ENCODE measurements at regions of chr18 and their contacts with region 1.

Region 1: GRCh38 chr18:21064347-21064746 is 47.3 kb downstream of the ROCK1 start:
- DNase-seq: no peak
- H3K4me3 ChIP-seq: no peak overlapping the region
- H3K27ac ChIP-seq: no peak overlapping the region
- H3K4me1 ChIP-seq: no peaks in the 10 kb centered on the region
- H3K27me3 ChIP-seq: no peaks in the 10 kb centered on the region
- CTCF ChIP-seq: no peak

Region 2: DNA sequence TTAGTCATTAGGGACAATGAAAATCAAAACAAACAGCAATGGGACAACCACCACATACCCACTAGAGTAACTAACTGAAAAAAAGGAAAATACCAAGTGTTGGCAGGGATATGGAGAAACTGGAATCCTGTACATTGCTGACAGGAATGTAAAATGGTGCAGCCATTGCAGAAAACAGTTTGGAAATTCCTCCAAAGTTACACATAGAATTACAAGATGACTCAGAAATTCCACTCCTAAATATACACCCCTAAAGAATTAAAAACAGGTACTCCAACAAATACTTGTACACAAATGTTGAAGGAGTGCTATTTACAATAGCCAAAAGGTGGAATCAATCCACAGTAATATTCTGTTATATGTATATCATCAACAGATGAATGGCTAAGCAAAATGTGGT is 63.7 kb before region 1 on chr18:
- CTCF ChIA-PET with region 1: no interaction called
- dilution Hi-C with region 1: no loop called
- in situ Hi-C with region 1: no loop called
- intact Hi-C with region 1: no loop called
- DNase-seq: peak; percentile 20
- H3K4me3 ChIP-seq: no peak overlapping the region
- H3K27ac ChIP-seq: no peak overlapping the region
- H3K4me1 ChIP-seq: peaks cover 8% of the 10 kb centered on the region
- H3K27me3 ChIP-seq: no peaks in the 10 kb centered on the region
- CTCF ChIP-seq: no peak

Region 3: DNA sequence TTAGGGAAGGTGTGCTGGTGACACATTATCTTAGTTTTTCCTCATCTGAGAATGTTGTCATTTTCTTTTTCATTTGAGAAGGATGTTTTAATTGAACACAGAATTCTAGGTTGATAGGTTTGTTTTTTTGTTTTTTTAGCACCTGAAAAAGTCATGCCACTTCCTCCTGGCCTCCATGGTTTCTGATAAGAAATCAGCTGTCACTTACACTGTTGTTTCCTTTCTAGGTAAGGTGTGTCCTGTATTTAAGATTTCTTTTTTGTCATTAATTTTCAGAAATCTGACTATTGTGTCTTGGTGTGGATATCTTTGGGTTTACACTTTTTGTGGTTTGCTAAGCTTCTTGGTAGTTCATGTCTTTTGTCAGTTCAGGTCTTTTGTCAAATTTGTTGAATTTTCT is 52.0 kb before region 1 on chr18:
- CTCF ChIA-PET with region 1: no interaction called
- dilution Hi-C with region 1: no loop called
- in situ Hi-C with region 1: loop called in 1 of 2 experiments (anchors 5 kb)
- intact Hi-C with region 1: no loop called
- DNase-seq: no peak
- H3K4me3 ChIP-seq: no peak overlapping the region
- H3K27ac ChIP-seq: no peak overlapping the region
- H3K4me1 ChIP-seq: no peaks in the 10 kb centered on the region
- H3K27me3 ChIP-seq: no peaks in the 10 kb centered on the region
- CTCF ChIP-seq: no peak

Region 4: GRCh38 chr18:21134898-21135297 is 70.6 kb after region 1 on chr18:
- CTCF ChIA-PET with region 1: no interaction called
- dilution Hi-C with region 1: no loop called
- in situ Hi-C with region 1: no loop called
- intact Hi-C with region 1: no loop called
- DNase-seq: peak; percentile 20
- H3K4me3 ChIP-seq: no peak overlapping the region
- H3K27ac ChIP-seq: no peak overlapping the region
- H3K4me1 ChIP-seq: no peaks in the 10 kb centered on the region
- H3K27me3 ChIP-seq: no peaks in the 10 kb centered on the region
- CTCF ChIP-seq: peak; percentile 13 to 47

Region 5: GRCh38 chr18:21257386-21257785 is 193.0 kb after region 1 on chr18:
- CTCF ChIA-PET with region 1: no interaction called
- dilution Hi-C with region 1: no loop called
- in situ Hi-C with region 1: no loop called
- intact Hi-C with region 1: no loop called
- DNase-seq: no peak
- H3K4me3 ChIP-seq: no peak overlapping the region
- H3K27ac ChIP-seq: no peak overlapping the region
- H3K4me1 ChIP-seq: no peaks in the 10 kb centered on the region
- H3K27me3 ChIP-seq: no peaks in the 10 kb centered on the region
- CTCF ChIP-seq: no peak